Activated T-helper 2 cell treated with anti-CD3 and anti-CD28 coated beads, Interferon-gamma antibody, Interleukin-2, Interleukin-4, amounts not matched to agents 10 μg/mL and 5 μg/mL and 100 μg/mL, durations not matched to agents 14 hours and 24 hours and 36 hours (primary cell): ENCODE measurements at regions of chr3 and their contacts with region 1.

Region 1: GRCh38 chr3:45656575-45657363 is 32.4 kb upstream of the SACM1L start:
- DNase-seq: peak; percentile 73
- H3K4me3 Mint-ChIP-seq: no peak overlapping the region
- H3K27ac Mint-ChIP-seq: no peak overlapping the region
- H3K4me1 Mint-ChIP-seq: peaks cover 12% of the 10 kb centered on the region
- H3K27me3 Mint-ChIP-seq: no peaks in the 10 kb centered on the region

Region 2: GRCh38 chr3:45037734-45038455 is 618.9 kb before region 1 on chr3:
- intact Hi-C with region 1: loop called (anchors 1 kb)
- DNase-seq: peak; percentile 88
- H3K4me3 Mint-ChIP-seq: no peak overlapping the region
- H3K27ac Mint-ChIP-seq: no peak overlapping the region
- H3K4me1 Mint-ChIP-seq: peaks cover 53% of the 10 kb centered on the region
- H3K27me3 Mint-ChIP-seq: peaks cover 8% of the 10 kb centered on the region

Region 3: GRCh38 chr3:45224824-45225464 is 431.8 kb before region 1 on chr3:
- intact Hi-C with region 1: loop called (anchors 10 kb)
- DNase-seq: peak; percentile 13
- H3K4me3 Mint-ChIP-seq: peak overlapping the region; percentile 84
- H3K27ac Mint-ChIP-seq: peak overlapping the region; percentile 62
- H3K4me1 Mint-ChIP-seq: peaks cover 14% of the 10 kb centered on the region
- H3K27me3 Mint-ChIP-seq: peaks cover 77% of the 10 kb centered on the region

Region 4: DNA sequence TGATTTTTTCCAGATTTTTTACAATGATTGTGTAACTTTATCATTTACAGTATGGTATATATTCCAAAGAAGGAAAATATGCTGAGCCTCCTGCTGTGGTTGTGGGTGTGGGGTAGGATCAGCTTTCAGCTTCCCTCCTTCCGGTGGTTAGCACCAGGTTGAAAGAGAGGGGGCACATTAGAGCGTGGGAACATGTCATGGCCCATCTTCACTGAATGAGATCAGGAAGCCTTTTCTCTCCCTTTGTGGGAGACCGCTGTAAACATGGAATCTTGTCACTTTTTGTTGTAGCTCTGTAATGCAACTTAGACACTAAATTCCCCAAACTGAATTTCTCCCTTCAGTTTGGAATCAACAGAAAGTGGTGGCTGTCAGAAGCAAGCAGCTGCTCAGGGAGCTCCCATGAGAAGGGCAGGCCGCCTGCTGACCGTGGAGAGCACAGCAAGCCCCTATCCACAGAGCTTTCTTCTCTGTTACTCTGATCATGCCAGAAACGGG is 148.9 kb before region 1 on chr3:
- intact Hi-C with region 1: loop called (anchors 1 kb)
- DNase-seq: no peak
- H3K4me3 Mint-ChIP-seq: no peak overlapping the region
- H3K27ac Mint-ChIP-seq: no peak overlapping the region
- H3K4me1 Mint-ChIP-seq: peaks cover 8% of the 10 kb centered on the region
- H3K27me3 Mint-ChIP-seq: no peaks in the 10 kb centered on the region

Region 5: DNA sequence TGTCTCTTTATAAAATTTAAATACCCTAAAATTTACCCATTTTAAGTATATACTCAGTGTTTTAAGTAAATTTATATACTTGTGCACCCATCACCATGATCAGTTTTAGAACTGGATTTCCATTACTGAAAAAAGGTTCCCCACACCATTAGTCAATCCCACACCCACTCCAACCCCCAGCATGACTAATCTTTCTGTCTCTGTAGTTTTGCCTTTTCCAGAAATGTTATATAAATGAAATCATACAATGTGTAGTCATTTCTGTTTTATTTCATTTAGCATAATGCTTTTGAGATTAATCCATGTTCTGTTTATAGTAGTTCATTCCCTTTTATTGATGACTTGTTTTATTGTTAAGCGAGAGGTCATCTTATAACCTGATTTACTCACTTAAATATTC is 128.3 kb before region 1 on chr3:
- intact Hi-C with region 1: loop called (anchors 5 kb)
- DNase-seq: no peak
- H3K4me3 Mint-ChIP-seq: no peak overlapping the region
- H3K27ac Mint-ChIP-seq: peak overlapping the region; percentile 10
- H3K4me1 Mint-ChIP-seq: peaks cover 15% of the 10 kb centered on the region
- H3K27me3 Mint-ChIP-seq: no peaks in the 10 kb centered on the region

Region 6: GRCh38 chr3:45593708-45594609 is 62.8 kb before region 1 on chr3:
- intact Hi-C with region 1: loop called (anchors 5 kb)
- DNase-seq: peak; percentile 74
- H3K4me3 Mint-ChIP-seq: peak overlapping the region; percentile 92
- H3K27ac Mint-ChIP-seq: peak overlapping the region; percentile 84
- H3K4me1 Mint-ChIP-seq: peaks cover 49% of the 10 kb centered on the region
- H3K27me3 Mint-ChIP-seq: peaks cover 6% of the 10 kb centered on the region